ENCODE measurements at regions of chr18 and their contacts with region 1.

Region 1: GRCh38 chr18:3665780-3666525 is 216.0 kb downstream of the TGIF1 start:
- DNase-seq: peak; percentile 76
- ATAC-seq: peak; percentile 87
- H3K4me3 Mint-ChIP-seq: no peak overlapping the region
- H3K27ac Mint-ChIP-seq: no peak overlapping the region
- H3K4me1 Mint-ChIP-seq: peaks cover 20% of the 10 kb centered on the region
- H3K27me3 Mint-ChIP-seq: no peaks in the 10 kb centered on the region
- CTCF ChIP-seq: peak; percentile 99

Region 2: GRCh38 chr18:3281456-3282400 is 384.2 kb before region 1 on chr18:
- CTCF ChIA-PET with region 1: interaction called, 203 read pairs
- POLR2A ChIA-PET with region 1: no interaction called
- intact Hi-C with region 1: loop called (anchors 2 kb)
- DNase-seq: no peak
- ATAC-seq: peak; percentile 88
- H3K4me3 Mint-ChIP-seq: no peak overlapping the region
- H3K27ac Mint-ChIP-seq: no peak overlapping the region
- H3K4me1 Mint-ChIP-seq: peaks cover 9% of the 10 kb centered on the region
- H3K27me3 Mint-ChIP-seq: no peaks in the 10 kb centered on the region
- CTCF ChIP-seq: peak; percentile 76

Region 3: DNA sequence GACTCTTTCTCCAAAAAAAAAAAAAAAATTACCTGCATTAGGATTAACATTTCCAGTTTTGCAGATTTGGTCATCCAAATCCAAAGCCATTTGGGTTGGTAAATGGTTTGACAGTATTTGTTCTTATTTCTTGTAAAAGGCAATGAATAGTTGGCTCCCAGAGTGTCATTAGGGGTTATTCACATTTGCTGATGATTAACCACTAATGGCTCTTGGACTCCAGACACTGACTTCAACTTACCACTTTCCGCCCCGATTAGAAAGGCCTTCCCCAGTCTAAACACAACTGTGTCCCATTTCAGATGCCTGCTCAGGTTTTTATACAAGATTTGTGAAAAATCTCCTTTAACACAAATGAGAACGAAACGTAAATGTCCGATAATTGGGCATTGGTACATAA is 225.6 kb before region 1 on chr18:
- CTCF ChIA-PET with region 1: interaction called, 13 read pairs
- POLR2A ChIA-PET with region 1: no interaction called
- intact Hi-C with region 1: no loop called
- DNase-seq: no peak
- ATAC-seq: no peak
- H3K4me3 Mint-ChIP-seq: no peak overlapping the region
- H3K27ac Mint-ChIP-seq: no peak overlapping the region
- H3K4me1 Mint-ChIP-seq: peaks cover 4% of the 10 kb centered on the region
- H3K27me3 Mint-ChIP-seq: peaks cover 2% of the 10 kb centered on the region
- CTCF ChIP-seq: no peak

Region 4: GRCh38 chr18:3585656-3586509 is 80.1 kb before region 1 on chr18:
- CTCF ChIA-PET with region 1: interaction called, 44 read pairs
- POLR2A ChIA-PET with region 1: interaction called, 6 read pairs
- intact Hi-C with region 1: no loop called
- DNase-seq: peak; percentile 85
- ATAC-seq: peak; percentile 85
- H3K4me3 Mint-ChIP-seq: no peak overlapping the region
- H3K27ac Mint-ChIP-seq: no peak overlapping the region
- H3K4me1 Mint-ChIP-seq: peaks cover 25% of the 10 kb centered on the region
- H3K27me3 Mint-ChIP-seq: no peaks in the 10 kb centered on the region
- CTCF ChIP-seq: peak; percentile 82

Region 5: GRCh38 chr18:3612315-3612714 is 53.6 kb before region 1 on chr18:
- CTCF ChIA-PET with region 1: interaction called, 27 read pairs
- POLR2A ChIA-PET with region 1: no interaction called
- intact Hi-C with region 1: no loop called
- DNase-seq: peak; percentile 68
- ATAC-seq: peak; percentile 51
- H3K4me3 Mint-ChIP-seq: no peak overlapping the region
- H3K27ac Mint-ChIP-seq: no peak overlapping the region
- H3K4me1 Mint-ChIP-seq: peaks cover 23% of the 10 kb centered on the region
- H3K27me3 Mint-ChIP-seq: no peaks in the 10 kb centered on the region
- CTCF ChIP-seq: no peak

Region 6: DNA sequence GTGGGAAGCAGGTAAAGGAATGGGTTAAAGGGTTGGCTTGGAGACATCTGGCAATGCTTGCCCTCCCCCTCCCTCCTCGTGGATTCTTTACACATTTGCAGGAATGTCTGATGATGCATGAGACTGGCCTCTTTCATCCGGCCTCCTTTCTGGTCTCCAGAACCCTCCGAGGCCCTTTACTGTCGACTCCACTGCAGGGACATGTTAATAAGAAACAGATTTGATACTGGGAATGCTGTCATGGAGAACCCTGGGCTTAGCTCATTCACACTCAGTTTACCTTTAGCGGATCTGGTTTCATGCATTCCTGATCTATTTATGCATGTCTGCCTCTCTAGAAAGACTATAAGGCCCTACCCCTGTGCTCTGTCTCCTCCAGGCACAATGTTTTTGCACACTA is 22.7 kb after region 1 on chr18:
- CTCF ChIA-PET with region 1: interaction called, 14 read pairs
- POLR2A ChIA-PET with region 1: no interaction called
- intact Hi-C with region 1: no loop called
- DNase-seq: no peak
- ATAC-seq: no peak
- H3K4me3 Mint-ChIP-seq: no peak overlapping the region
- H3K27ac Mint-ChIP-seq: no peak overlapping the region
- H3K4me1 Mint-ChIP-seq: no peaks in the 10 kb centered on the region
- H3K27me3 Mint-ChIP-seq: no peaks in the 10 kb centered on the region
- CTCF ChIP-seq: no peak

Region 7: GRCh38 chr18:3758531-3758930 is 92.6 kb after region 1 on chr18:
- CTCF ChIA-PET with region 1: no interaction called
- POLR2A ChIA-PET with region 1: no interaction called
- intact Hi-C with region 1: no loop called
- DNase-seq: no peak
- ATAC-seq: no peak
- H3K4me3 Mint-ChIP-seq: no peak overlapping the region
- H3K27ac Mint-ChIP-seq: no peak overlapping the region
- H3K4me1 Mint-ChIP-seq: no peaks in the 10 kb centered on the region
- H3K27me3 Mint-ChIP-seq: no peaks in the 10 kb centered on the region
- CTCF ChIP-seq: no peak

Region 8: DNA sequence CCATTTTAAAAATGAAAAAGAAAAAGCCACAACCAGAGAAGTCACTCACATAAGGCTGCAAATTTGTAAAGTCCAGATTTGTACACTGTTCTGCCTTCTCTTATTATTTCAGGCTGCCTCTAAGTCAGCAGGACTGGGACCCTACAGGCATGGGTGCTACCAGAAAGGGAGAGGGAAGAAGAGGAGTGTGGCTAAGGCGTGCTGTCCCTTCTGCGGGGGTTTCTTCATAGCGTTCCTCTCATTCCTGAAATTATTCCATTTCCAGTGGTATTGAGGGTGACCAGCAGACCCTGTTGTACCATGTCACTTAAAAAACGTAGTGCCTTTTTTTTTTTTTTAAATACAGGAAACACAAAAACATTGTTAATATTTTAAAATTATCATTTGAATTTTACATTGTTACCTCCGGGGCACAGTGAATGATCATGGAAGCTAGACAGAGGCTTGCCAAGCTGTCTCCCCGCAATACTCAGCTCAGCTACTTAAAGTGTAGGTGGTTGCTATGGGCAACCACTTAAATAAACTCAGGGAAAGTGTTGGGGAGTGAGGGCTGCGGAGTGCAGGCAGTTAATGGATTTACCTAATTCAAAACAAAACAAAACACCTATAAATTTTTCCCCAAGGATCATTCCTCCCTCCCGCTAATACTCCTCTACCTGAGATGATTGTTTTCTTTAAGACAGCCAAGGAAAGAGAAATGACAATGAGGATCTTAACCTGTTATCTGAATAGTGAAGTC is 133.4 kb after region 1 on chr18:
- CTCF ChIA-PET with region 1: no interaction called
- POLR2A ChIA-PET with region 1: no interaction called
- intact Hi-C with region 1: no loop called
- DNase-seq: no peak
- ATAC-seq: no peak
- H3K4me3 Mint-ChIP-seq: no peak overlapping the region
- H3K27ac Mint-ChIP-seq: no peak overlapping the region
- H3K4me1 Mint-ChIP-seq: peaks cover under 1% of the 10 kb centered on the region
- H3K27me3 Mint-ChIP-seq: peaks cover 6% of the 10 kb centered on the region
- CTCF ChIP-seq: no peak

Measured in activated CD8-positive, alpha-beta T cell treated with anti-CD3 and anti-CD28 coated beads for 36 hours (primary cell).